Posterior cingulate gyrus (tissue), 11 donors: ENCODE measurements at regions of chr1 and their contacts with region 1.

Region 1: DNA sequence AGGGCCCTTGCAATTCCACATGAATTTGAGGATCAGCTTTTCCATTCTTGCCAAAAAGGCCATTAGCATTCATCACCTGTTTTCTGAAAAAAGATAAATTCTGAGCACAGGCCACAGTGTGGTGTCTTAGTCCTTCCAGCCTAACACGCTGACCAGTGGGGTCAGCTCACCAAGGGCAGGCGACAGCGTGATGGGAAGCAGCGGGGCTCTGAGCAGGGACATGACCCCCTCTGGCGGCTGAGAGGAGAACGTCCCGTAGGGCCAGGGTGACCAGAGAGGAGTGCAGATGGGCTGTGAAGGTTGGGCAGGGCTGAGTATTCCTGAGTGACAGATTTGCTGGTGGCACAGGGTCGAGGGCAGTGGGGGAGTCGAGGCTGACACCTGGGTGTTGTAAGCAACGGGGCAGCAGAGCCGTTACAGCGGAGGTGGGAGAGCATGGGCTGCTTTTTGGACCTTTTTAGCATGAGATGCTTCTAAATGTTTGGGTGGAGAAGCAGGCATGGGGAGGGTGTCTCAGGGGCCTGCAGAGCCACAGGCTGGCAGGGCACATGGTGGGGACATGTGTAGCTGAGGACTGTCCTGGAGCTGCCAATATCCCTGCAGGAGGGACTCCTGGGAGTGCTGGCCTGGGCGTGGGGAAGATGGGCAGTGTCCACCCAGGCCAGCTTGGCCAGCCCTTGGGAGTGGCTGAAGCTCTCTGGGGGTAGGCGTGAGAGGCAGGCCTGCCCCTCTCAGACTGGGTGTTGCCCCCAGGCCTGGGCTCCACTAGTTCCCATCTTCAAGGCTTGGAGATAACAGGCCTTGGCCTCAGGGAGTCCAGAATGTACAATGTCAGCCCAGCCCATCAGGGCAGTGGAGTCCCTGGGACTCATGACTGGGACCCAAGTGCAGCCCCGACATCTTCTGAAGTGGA is 8.6 kb upstream of the CALML6 start:
- DNase-seq: peak; percentile 63 to 98 (median 86)

Region 2: GRCh38 chr1:1763657-1764616 is 142.5 kb before region 1 on chr1:
- intact Hi-C with region 1: loop called (anchors 5 kb)
- DNase-seq: peak in 8 of 10 donors; percentile 55 to 96 (median 82)

Region 3: DNA sequence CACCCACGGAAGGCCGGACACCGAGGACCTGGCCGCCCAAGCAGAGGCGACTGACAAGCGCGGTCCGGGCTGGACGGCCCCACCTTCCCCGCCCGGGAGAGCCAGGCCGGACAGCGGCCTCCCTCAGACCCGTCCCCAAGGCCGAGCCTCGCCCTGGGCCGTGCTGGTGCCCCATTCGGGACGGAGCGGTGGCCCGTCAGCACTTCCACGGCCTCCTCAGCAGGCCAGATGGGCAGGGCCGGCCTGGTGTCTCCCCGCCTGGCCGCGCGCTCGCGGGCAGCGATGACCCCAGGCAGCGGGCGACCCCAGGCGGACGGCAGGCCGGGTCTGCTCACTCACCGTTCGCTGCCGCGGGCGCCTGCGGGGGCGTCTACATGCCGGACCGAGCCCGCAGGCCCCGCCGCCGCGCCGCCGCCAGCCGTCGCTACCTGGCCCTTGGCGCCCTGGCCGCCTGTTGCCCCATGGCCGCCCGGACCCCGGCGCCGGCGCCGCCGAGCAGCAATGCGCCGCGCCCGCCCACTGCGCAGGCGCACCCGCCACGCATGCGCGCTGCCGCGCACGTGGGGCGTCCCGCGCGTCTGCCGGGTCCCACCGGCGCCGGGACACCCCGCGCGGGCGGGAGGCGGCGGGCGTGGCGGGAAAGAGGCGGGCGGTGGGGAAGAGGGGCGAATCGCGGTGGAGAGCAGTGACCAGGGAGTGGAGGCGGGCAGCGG is 128.3 kb before region 1 on chr1 and contains the start of gene NADK:
- intact Hi-C with region 1: loop called (anchors 5 kb)
- DNase-seq: peak in 7 of 10 donors; percentile 43 to 93 (median 72)

Region 4: DNA sequence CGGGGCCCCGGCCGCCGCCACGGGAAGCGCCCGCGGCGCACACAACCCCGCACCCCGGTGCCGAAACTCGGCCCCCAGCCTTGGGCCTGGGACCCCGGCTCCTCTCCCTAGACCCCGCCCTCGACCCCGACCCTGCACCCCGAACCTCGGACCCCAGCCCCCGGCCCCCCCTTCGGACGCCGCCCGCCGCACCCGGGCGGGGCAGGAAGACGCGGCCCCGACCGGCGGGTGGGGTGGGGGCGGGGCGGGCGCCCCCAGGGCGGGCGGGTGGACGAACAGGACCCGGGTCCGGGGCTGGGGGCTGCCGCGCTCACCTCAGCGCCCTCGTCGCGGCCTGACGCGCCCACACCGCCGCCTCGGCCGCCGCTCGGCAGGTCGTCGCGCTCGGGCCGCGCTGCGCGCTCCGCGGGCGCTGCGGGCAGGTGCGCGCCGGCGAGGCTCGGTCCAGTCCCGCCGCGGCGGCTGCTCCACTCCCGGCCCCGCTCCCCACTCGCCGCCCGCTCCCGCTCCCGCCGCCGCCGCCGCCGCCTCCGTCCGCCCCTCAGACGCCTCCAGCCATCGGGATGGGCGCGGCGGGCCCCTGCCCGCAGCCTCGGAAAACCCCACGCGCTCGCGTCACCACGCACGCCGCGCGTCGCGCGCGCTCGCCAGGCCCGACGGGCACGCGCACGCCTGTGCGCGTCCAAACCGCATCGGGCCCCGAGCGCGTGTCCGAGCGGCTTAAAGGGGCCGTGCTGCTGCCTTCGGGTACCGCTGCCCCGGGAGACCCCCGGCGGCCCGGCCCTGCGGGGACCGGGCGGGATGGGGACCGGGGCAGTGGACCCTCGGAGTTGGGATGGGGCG is 15.7 kb before region 1 on chr1 and contains the start of gene GNB1:
- intact Hi-C with region 1: loop called (anchors 2 kb)
- DNase-seq: peak; percentile 74 to 98 (median 83)